ENCODE measurements at regions of chr15 and their contacts with region 1.

Region 1: GRCh38 chr15:53437366-53437765 is 322.1 kb downstream of the WDR72 start:
- DNase-seq: no peak

Region 2: GRCh38 chr15:53490341-53490740 is 53.0 kb after region 1 on chr15:
- intact Hi-C with region 1: loop called in 1 of 2 experiments (anchors 2 kb)
- DNase-seq: no peak

Region 3: GRCh38 chr15:53530761-53531160 is 93.4 kb after region 1 on chr15:
- intact Hi-C with region 1: no loop called
- DNase-seq: no peak

Measured in posterior vena cava (tissue), 2 donors.